Activated CD4-positive, alpha-beta T cell treated with anti-CD3 and anti-CD28 coated beads, Interleukin-2, amount 10 ng/mL, durations not matched to agents 24 days and 14 days (primary cell): ENCODE measurements at regions of chr3 and their contacts with region 1.

Region 1: DNA sequence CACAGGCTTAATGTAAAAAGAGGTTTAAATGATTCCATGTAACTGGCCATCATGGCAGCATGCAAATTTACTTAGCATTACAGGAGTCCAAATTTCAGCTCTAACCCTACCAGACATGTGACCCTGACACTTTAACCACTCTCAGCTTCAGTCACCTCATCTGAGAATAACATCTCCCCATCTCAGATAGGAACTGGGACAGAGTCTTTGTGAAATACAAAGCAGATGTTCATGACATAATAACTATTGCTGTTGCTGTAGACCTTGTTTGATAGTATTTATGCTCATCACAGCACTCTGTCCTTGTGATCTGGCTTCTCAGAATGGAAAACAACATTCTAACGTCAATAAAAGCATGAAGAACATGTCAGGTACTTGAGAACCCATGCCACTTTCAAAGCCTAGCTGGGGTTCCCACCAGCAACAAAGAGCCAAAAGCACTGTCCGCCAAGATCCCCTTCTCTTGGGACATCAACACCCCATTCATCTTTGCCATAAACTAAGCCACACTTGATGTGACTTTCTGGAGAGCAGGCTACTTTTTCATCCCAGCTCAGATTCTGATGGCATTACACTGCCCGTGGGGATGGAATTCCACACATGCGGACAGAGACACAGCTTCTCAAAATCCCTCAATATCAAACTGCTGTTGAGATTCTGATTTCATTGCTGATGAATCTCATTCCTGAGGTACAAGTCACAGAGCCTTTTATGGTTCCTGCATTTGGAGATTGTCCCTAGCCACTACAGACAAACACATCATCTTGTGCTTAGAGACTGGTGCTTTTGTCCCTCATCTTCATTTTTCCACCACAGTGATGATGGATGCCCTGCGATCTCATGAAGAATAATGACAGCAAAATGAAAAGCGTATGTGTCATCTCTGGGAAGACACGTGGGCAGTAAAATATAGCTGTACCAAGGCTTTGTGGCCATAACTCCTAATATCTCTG is 202.7 kb downstream of the TNIK start:
- DNase-seq: peak; percentile 69
- H3K4me3 Mint-ChIP-seq: peak overlapping the region; percentile 49
- H3K27ac Mint-ChIP-seq: peak overlapping the region; percentile 93
- H3K4me1 Mint-ChIP-seq: peaks cover 81% of the 10 kb centered on the region
- H3K27me3 Mint-ChIP-seq: no peaks in the 10 kb centered on the region

Region 2: DNA sequence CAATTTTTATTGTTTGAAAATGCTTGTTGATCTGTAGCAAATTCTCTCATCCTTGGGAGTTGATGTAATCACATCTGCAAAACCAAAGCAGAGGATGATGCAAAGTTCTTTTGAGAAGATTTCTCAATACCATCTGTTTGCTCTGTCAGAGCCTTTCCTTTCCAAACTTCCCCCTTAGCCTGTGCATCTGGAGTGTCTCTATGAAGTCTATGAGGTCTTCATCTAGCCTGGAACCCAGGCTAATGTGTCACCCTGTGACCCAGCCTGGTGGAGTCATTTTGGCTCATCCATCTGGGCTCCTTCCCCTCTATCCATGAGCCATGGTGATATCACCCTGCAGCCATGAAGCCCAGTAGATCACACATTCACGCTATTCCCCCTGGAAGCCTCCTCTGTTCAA is 548.5 kb before region 1 on chr3:
- intact Hi-C with region 1: no loop called
- DNase-seq: no peak
- H3K4me3 Mint-ChIP-seq: no peak overlapping the region
- H3K27ac Mint-ChIP-seq: no peak overlapping the region
- H3K4me1 Mint-ChIP-seq: no peaks in the 10 kb centered on the region
- H3K27me3 Mint-ChIP-seq: peaks cover 2% of the 10 kb centered on the region

Region 3: GRCh38 chr3:170908235-170909116 is 349.1 kb before region 1 on chr3 and contains the start of gene EIF5A2:
- intact Hi-C with region 1: loop called (anchors 10 kb)
- DNase-seq: peak; percentile 97
- H3K4me3 Mint-ChIP-seq: peak within 1 kb of the TSS; percentile 99
- H3K27ac Mint-ChIP-seq: peak within 1 kb of the TSS; percentile 95
- H3K4me1 Mint-ChIP-seq: peaks cover 19% of the 10 kb centered on the region
- H3K27me3 Mint-ChIP-seq: peaks cover 15% of the 10 kb centered on the region
- total RNA-seq, gene EIF5A2: 8.7 and 9.7 TPM in 2 replicates

Region 4: GRCh38 chr3:171269542-171269941 is 12.0 kb after region 1 on chr3:
- intact Hi-C with region 1: loop called (anchors 2 kb)
- DNase-seq: peak; percentile 61
- H3K4me3 Mint-ChIP-seq: peak overlapping the region; percentile 56
- H3K27ac Mint-ChIP-seq: peak overlapping the region; percentile 13
- H3K4me1 Mint-ChIP-seq: peaks cover 67% of the 10 kb centered on the region
- H3K27me3 Mint-ChIP-seq: no peaks in the 10 kb centered on the region

Region 5: GRCh38 chr3:171284308-171285075 is 27.0 kb after region 1 on chr3:
- intact Hi-C with region 1: loop called (anchors 2 kb)
- DNase-seq: no peak
- H3K4me3 Mint-ChIP-seq: peak overlapping the region; percentile 23
- H3K27ac Mint-ChIP-seq: peak overlapping the region; percentile 69
- H3K4me1 Mint-ChIP-seq: peaks cover 44% of the 10 kb centered on the region
- H3K27me3 Mint-ChIP-seq: no peaks in the 10 kb centered on the region

Region 6: DNA sequence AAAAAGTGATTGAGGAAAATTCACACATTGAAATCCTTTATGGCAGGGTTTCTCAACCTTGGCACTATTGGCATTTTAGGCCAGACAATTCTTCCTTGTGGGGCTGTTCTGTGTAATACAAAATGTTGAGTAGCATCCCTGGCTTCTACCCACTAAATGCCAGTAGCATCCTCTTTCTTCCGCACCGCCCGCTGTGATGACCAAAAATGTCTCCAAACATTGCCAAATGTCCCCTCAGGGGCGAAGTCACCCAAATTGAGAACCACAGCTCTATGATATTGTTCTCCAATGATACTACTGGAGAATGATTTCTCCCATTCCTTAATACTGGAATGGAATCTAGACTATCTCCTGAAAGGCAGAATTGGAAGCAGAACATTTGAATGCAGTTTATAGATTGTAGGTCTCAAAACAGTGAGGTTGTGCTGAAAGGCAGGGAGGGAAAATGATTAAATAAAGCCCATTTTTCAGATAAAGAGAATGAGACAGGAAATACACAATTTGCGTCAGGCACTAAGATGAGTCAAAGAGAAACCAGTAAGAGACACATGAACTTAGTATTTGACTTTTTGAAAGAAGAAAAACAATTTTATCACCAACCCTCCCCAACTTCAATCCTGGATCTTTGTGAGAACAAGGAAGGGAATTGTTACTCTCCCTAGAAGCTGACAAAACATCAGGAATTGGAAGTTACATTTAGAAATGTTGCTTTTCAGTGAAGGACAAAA is 304.2 kb after region 1 on chr3:
- intact Hi-C with region 1: loop called (anchors 5 kb)
- DNase-seq: peak; percentile 65
- H3K4me3 Mint-ChIP-seq: peak overlapping the region; percentile 77
- H3K27ac Mint-ChIP-seq: peak overlapping the region; percentile 96
- H3K4me1 Mint-ChIP-seq: peaks cover 46% of the 10 kb centered on the region
- H3K27me3 Mint-ChIP-seq: no peaks in the 10 kb centered on the region